H1 (cell line): ENCODE measurements at regions of chr15 and their contacts with region 1.

Region 1: GRCh38 chr15:44066316-44066740 is 128.7 kb downstream of the FRMD5 start:
- DNase-seq: peak; percentile 23 to 73
- H3K4me3 ChIP-seq: no peak overlapping the region
- H3K27ac ChIP-seq: no peak overlapping the region
- H3K4me1 ChIP-seq: no peaks in the 10 kb centered on the region
- H3K27me3 ChIP-seq: no peaks in the 10 kb centered on the region
- CTCF ChIP-seq: peak in 2 of 3 experiments; percentile 75 to 78; a peak in 3 of 4 replicates
- EP300 ChIP-seq: no peak
- POLR2A ChIP-seq: no peak
- RAD21 ChIP-seq: peak; percentile 91 to 93

Region 2: DNA sequence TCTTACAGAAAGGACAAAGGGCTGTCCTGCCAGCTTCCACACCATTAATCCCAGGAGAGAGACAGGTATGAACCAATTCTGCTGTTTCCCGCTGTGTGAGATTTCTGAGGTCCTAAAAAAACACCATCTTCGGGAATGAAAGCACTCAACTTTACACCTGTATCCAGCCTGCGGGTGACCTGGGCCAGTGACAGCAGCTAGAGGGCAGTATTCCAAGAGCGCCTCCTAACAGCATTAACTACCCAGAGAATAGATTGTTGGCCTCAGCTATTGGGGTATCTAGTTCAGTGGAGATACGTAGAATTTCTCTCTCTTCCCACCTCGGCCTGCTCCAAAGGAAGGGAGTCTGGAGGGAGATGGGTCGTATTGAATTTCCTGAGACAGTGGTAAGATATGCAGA is 184.4 kb before region 1 on chr15:
- CTCF ChIA-PET with region 1: interaction called, 10 read pairs
- POLR2A ChIA-PET with region 1: no interaction called
- DNase-seq: peak in 1 of 2 experiments; percentile 67
- H3K4me3 ChIP-seq: no peak overlapping the region
- H3K27ac ChIP-seq: no peak overlapping the region
- H3K4me1 ChIP-seq: peaks cover 0 to 13% (median 5%) of the 10 kb centered on the region in 4 experiments; a peak in 3 of 7 replicates
- H3K27me3 ChIP-seq: no peaks in the 10 kb centered on the region
- CTCF ChIP-seq: peak; percentile 79 to 90 (median 88)
- EP300 ChIP-seq: no peak
- POLR2A ChIP-seq: 0 out of 3 replicates have a peak, but pooled peaks of 1 of the 2 experiments have one; percentile 17
- RAD21 ChIP-seq: peak; percentile 55 to 62

Region 3: GRCh38 chr15:43930079-43930478 is 136.2 kb before region 1 on chr15:
- CTCF ChIA-PET with region 1: interaction called, 10 read pairs
- POLR2A ChIA-PET with region 1: interaction called, 5 read pairs
- DNase-seq: peak; percentile 23 to 51
- H3K4me3 ChIP-seq: no peak overlapping the region
- H3K27ac ChIP-seq: peak overlapping the region; percentile 32; the same call in 1 of the 2 replicates
- H3K4me1 ChIP-seq: peaks cover 26 to 51% (median 35%) of the 10 kb centered on the region in 4 experiments; a peak in 6 of 7 replicates
- H3K27me3 ChIP-seq: no peaks in the 10 kb centered on the region
- CTCF ChIP-seq: no peak
- EP300 ChIP-seq: no peak
- POLR2A ChIP-seq: no peak
- RAD21 ChIP-seq: no peak

Region 4: GRCh38 chr15:43939070-43939469 is 127.3 kb before region 1 on chr15:
- CTCF ChIA-PET with region 1: interaction called, 14 read pairs
- POLR2A ChIA-PET with region 1: no interaction called
- DNase-seq: peak in 1 of 2 experiments; percentile 55
- H3K4me3 ChIP-seq: no peak overlapping the region
- H3K27ac ChIP-seq: no peak overlapping the region
- H3K4me1 ChIP-seq: no peaks in the 10 kb centered on the region
- H3K27me3 ChIP-seq: no peaks in the 10 kb centered on the region; a peak in 1 of 7 replicates
- CTCF ChIP-seq: peak in 2 of 3 experiments; percentile 48 to 55; a peak in 3 of 4 replicates
- EP300 ChIP-seq: no peak
- POLR2A ChIP-seq: no peak
- RAD21 ChIP-seq: peak; percentile 44 to 59

Region 5: DNA sequence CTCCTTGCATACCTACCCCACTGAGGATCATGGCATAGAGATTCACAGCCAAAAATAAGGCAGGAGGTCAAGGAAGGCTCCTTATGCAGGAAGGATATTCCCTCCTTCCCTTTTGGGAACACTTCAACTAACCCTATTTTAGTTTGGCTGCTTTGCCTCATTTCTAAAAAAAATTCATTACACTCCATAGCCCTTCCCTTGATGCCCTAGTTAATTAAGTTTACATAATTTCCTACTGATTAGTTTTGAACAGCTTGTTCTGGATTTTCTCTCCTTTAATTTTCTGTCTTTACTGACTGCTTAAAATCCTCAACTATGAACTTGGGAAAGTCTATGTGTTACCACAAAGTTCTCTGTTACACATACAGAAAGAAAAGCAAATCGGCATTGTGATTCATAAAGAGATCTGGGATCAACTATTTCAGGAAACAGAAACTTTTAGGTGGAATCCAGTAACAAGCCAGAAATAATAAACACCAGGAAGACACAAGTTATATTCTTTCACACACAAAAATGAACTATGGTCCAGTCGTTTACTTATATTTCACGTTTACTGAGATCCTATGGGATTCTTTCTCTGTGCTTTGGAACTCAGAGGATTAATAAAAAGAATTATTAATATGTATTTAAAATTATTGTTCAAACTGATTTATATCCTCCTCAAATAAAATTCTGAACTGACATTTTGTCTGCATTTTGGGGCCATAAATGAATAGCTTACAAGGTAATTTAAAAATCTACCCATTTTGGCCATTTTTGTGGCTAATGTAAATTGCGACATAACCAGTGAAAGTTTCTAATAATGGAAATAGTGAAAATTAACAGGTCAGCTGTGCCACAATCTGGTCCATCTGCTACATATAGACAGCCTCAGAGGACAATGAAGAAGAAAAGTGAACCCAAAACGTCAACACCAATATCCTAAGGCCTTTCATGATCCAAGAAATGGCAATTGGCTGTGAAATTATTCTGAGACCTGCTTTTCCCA is 15.0 kb after region 1 on chr15:
- CTCF ChIA-PET with region 1: interaction called, 11 read pairs
- POLR2A ChIA-PET with region 1: no interaction called
- DNase-seq: no peak
- H3K4me3 ChIP-seq: no peak overlapping the region
- H3K27ac ChIP-seq: no peak overlapping the region
- H3K4me1 ChIP-seq: no peaks in the 10 kb centered on the region
- H3K27me3 ChIP-seq: no peaks in the 10 kb centered on the region
- CTCF ChIP-seq: no peak
- EP300 ChIP-seq: no peak
- POLR2A ChIP-seq: no peak
- RAD21 ChIP-seq: no peak

Region 6: GRCh38 chr15:44087572-44088465 is 21.5 kb after region 1 on chr15:
- CTCF ChIA-PET with region 1: interaction called, 11 read pairs
- POLR2A ChIA-PET with region 1: no interaction called
- DNase-seq: no peak
- H3K4me3 ChIP-seq: no peak overlapping the region
- H3K27ac ChIP-seq: no peak overlapping the region
- H3K4me1 ChIP-seq: no peaks in the 10 kb centered on the region
- H3K27me3 ChIP-seq: no peaks in the 10 kb centered on the region
- CTCF ChIP-seq: no peak
- EP300 ChIP-seq: no peak
- POLR2A ChIP-seq: no peak
- RAD21 ChIP-seq: no peak

Region 7: GRCh38 chr15:44173813-44174212 is 107.5 kb after region 1 on chr15:
- CTCF ChIA-PET with region 1: no interaction called
- POLR2A ChIA-PET with region 1: no interaction called
- DNase-seq: no peak
- H3K4me3 ChIP-seq: no peak overlapping the region
- H3K27ac ChIP-seq: no peak overlapping the region
- H3K4me1 ChIP-seq: no peaks in the 10 kb centered on the region
- H3K27me3 ChIP-seq: peaks cover 0 to 1% (median 0%) of the 10 kb centered on the region in 4 experiments; a peak in 1 of 7 replicates
- CTCF ChIP-seq: no peak
- EP300 ChIP-seq: no peak
- POLR2A ChIP-seq: no peak
- RAD21 ChIP-seq: no peak